Heart left ventricle (tissue), 16 donors: ENCODE measurements at regions of chr1 and their contacts with region 1.

Region 1: DNA sequence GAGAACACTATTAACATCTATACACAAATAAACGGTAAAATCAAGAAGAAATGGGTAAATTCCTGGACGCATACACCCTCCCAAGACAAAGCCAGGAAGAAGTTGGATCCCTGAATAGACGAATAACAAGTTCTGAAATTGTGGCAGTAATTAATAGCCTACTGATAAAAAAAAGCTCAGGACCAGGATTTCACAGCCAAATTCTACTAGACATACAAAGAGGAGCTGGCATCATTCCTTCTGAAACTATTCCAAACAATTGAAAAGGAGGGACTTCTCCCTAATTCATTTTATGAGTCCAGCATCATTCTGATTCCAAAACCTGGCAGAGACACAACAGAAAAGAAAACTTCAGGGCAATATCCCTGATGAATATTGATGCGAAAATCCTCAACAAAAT is 70.7 kb upstream of the FMO3 start:
- DNase-seq: no peak
- ATAC-seq: no peak
- H3K4me3 ChIP-seq: no peak overlapping the region
- H3K27ac ChIP-seq: no peak overlapping the region
- H3K4me1 ChIP-seq: no peaks in the 10 kb centered on the region
- H3K27me3 ChIP-seq: no peaks in the 10 kb centered on the region
- CTCF ChIP-seq: no peak
- POLR2A ChIP-seq: no peak

Region 2: GRCh38 chr1:171061425-171062143 is 41.6 kb after region 1 on chr1:
- intact Hi-C with region 1: loop called in 1 of 10 experiments (anchors 2 kb)
- DNase-seq: no peak
- ATAC-seq: no peak
- H3K4me3 ChIP-seq: no peak overlapping the region
- H3K27ac ChIP-seq: no peak overlapping the region
- H3K4me1 ChIP-seq: no peaks in the 10 kb centered on the region
- H3K27me3 ChIP-seq: no peaks in the 10 kb centered on the region
- CTCF ChIP-seq: no peak
- POLR2A ChIP-seq: no peak